Transverse colon (tissue), 4 donors: ENCODE measurements at regions of chr2 and their contacts with region 1.

Region 1: DNA sequence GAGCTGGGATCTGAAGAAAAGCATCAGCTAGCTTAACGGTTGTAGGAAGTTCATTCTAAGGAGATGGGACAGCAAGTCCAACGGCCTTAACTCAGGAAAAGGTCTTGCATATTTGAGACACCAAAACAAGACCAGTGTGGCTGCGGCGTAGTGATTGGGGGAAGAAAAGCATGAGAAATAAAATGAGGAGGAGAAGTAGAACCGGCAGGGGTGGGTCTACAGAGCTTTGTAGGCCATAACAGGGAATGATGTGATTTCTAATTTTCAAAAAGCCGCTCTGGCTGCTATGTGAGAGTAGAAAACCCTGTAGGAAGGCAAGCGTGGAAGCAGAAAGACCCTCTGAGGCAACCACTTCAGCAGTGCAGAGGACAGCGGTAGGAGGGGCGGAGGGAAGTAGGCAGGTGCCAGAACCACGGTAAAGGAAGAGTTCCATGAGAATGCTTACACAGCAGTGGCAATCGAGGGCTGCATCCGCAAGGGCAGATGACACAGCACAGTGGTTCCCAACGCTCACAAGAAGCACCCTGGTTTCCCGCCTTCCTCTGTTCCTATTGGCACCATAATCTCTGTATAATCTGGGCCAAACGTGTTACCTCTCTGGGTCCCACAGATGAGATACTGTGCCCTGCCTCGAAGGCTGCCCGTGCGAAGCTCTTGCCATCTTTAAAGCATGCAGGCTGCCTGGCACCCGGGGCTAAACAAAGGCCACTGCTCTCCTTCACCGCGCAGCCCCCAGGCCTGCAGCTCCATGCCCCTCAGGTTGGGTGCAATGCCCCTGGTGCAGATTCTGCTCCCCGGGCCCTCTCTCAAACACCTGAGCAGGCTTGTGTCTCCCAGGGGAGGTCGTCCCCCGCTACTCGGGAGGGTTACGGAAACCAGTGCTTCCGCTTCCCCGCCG is 791 bp downstream of the ANKRD39 start:
- DNase-seq: peak; percentile 45
- H3K4me3 ChIP-seq: peak overlapping the region; percentile 59 to 69 (median 64)
- H3K27ac ChIP-seq: peak overlapping the region; percentile 80 to 91 (median 90)
- H3K4me1 ChIP-seq: peaks cover 10 to 41% (median 34%) of the 10 kb centered on the region in 4 donors
- H3K27me3 ChIP-seq: no peaks in the 10 kb centered on the region
- CTCF ChIP-seq: no peak
- EP300 ChIP-seq: no peak
- POLR2A ChIP-seq: no peak

Region 2: GRCh38 chr2:96353032-96353561 is 503.9 kb before region 1 on chr2:
- in situ Hi-C with region 1: no loop called
- intact Hi-C with region 1: no loop called
- DNase-seq: no peak
- H3K4me3 ChIP-seq: no peak overlapping the region
- H3K27ac ChIP-seq: peak overlapping the region in 1 of 4 donors; percentile 12
- H3K4me1 ChIP-seq: no peaks in the 10 kb centered on the region
- H3K27me3 ChIP-seq: no peaks in the 10 kb centered on the region
- CTCF ChIP-seq: no peak
- EP300 ChIP-seq: no peak
- POLR2A ChIP-seq: no peak

Region 3: DNA sequence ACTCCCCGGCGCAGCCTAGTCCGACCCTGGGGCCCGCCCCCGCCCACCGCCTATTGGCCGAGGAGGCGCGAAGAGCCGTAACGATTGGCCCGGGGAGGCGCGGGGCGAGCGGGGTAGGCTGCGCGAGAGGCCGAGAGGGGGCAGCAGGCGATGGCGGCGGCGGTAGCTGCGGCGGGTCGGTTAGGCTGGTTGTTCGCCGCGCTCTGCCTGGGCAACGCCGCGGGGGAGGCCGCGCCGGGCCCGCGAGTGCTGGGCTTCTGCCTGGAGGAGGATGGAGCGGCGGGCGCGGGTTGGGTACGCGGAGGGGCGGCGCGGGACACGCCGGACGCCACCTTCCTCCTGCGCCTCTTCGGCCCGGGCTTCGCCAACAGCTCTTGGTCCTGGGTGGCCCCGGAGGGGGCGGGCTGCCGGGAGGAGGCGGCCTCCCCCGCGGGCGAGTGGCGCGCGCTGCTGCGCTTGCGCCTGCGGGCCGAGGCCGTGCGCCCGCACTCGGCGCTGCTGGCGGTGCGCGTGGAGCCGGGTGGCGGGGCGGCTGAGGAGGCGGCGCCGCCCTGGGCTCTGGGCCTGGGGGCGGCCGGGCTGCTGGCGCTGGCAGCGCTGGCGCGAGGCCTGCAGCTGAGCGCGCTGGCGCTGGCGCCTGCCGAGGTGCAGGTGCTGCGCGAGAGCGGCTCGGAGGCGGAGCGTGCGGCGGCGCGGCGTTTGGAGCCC is 40.7 kb before region 1 on chr2 and contains the start of gene CNNM3:
- in situ Hi-C with region 1: no loop called
- intact Hi-C with region 1: loop called (anchors 2 kb)
- DNase-seq: peak; percentile 98
- H3K4me3 ChIP-seq: peak within 1 kb of the TSS; percentile 57 to 93 (median 74)
- H3K27ac ChIP-seq: peak within 1 kb of the TSS; percentile 89 to 100 (median 98)
- H3K4me1 ChIP-seq: peaks cover 36 to 72% (median 52%) of the 10 kb centered on the region in 4 donors
- H3K27me3 ChIP-seq: no peaks in the 10 kb centered on the region
- CTCF ChIP-seq: peak; percentile 59 to 89 (median 65)
- EP300 ChIP-seq: no peak
- POLR2A ChIP-seq: peak; percentile 89
- total RNA-seq, gene CNNM3: 14.2 to 54.3 (median 22.3) TPM

Region 4: DNA sequence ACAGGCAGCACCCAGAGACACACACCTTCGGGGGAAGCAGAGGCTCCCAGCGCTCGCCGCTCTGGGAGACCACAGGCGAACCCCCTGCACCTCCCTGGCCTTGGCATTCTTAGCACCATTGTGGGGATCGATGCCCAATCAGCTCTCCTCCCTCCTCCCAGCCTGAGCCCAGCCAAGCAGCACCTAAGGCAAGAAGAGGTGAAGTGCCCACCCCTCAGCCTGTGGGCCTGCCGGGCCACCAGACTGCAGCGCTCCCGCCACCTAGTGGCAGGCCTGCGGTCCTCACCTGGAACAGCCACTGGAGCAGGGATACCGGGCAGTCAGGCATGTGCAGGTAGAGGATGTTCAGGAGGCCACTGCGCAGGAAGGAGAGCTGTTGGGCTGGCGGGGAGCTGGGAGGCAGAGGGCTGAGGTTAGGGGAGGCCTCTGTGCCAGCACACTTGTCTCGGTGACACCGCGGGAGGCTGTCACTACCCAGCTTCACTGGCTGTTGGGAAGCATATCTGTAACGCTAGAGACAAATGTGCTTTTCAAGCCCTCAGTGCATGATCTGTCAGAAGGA is 94.1 kb after region 1 on chr2:
- in situ Hi-C with region 1: loop called in 3 of 4 experiments (anchors 10 kb)
- intact Hi-C with region 1: loop called (anchors 2 kb)
- DNase-seq: peak; percentile 77
- H3K4me3 ChIP-seq: no peak overlapping the region
- H3K27ac ChIP-seq: peak overlapping the region in 3 of 4 donors; percentile 36 to 87 (median 47)
- H3K4me1 ChIP-seq: peaks cover 33 to 53% (median 41%) of the 10 kb centered on the region in 4 donors
- H3K27me3 ChIP-seq: no peaks in the 10 kb centered on the region
- CTCF ChIP-seq: peak; percentile 86 to 95 (median 94)
- EP300 ChIP-seq: no peak
- POLR2A ChIP-seq: no peak

Region 5: DNA sequence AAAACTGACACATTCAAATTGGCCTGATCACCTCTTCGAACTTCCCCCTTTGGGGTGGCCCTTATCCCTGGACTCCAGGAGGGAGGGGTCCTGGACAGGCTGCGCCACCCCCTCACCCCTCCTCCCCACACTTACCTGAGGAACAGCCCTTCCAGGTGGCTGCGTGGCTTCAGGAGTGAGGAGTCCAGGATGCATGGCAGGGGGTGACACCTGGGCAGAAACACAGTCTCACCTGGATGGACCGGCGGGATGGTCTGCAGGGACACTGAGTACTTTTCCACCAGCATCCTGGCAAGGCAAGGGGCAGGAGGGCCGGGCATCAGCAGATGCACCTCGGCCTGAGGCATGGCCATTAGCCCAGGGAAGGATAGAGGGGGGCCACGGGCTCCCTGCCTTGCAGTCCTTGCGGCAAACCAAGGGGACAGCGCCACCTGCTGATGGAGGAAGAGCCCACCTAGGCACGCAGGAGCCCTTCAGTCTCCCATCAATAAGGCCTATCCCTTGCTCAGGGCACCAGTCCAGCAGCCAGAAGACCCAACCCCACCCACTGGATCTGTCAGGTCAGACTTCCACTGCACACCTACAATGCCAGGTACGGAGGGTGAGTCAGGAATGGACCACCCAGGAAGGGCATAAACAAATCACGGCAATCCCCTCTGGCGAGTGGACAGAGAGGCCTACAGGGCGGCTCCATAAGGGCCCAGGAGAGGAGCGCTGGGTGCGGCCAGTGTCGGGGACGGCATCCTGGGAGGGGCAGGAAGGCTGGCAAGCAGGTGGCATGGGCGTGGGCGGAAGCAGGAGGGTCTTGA is 103.3 kb after region 1 on chr2:
- in situ Hi-C with region 1: loop called (anchors 5 to 10 kb)
- intact Hi-C with region 1: no loop called
- DNase-seq: peak; percentile 91
- H3K4me3 ChIP-seq: no peak overlapping the region
- H3K27ac ChIP-seq: peak overlapping the region in 3 of 4 donors; percentile 46 to 59 (median 47)
- H3K4me1 ChIP-seq: peaks cover 0 to 40% (median 19%) of the 10 kb centered on the region in 4 donors
- H3K27me3 ChIP-seq: no peaks in the 10 kb centered on the region
- CTCF ChIP-seq: peak; percentile 84 to 94 (median 89)
- EP300 ChIP-seq: no peak
- POLR2A ChIP-seq: no peak